IMR-90 (cell line): ENCODE measurements at regions of chr5 and their contacts with region 1.

Region 1: GRCh38 chr5:168268949-168269943 is 22.2 kb upstream of the WWC1 start:
- DNase-seq: peak; percentile 82
- ATAC-seq: peak; percentile 95
- H3K4me3 ChIP-seq: peak overlapping the region; percentile 38
- H3K27ac ChIP-seq: no peak overlapping the region
- H3K4me1 ChIP-seq: peaks cover 2% of the 10 kb centered on the region; the same call in 1 of the 2 replicates
- H3K27me3 ChIP-seq: no peaks in the 10 kb centered on the region; the same call in 1 of the 2 replicates
- CTCF ChIP-seq: peak; percentile 92
- POLR2A ChIP-seq: 0 out of 2 replicates have a peak, but pooled peaks have one; percentile 45
- RAD21 ChIP-seq: peak; percentile 97

Region 2: GRCh38 chr5:168198359-168198758 is 70.9 kb before region 1 on chr5:
- CTCF ChIA-PET with region 1: no interaction called
- POLR2A ChIA-PET with region 1: no interaction called
- dilution Hi-C with region 1: no loop called
- in situ Hi-C with region 1: no loop called
- intact Hi-C with region 1: no loop called
- DNase-seq: no peak
- ATAC-seq: no peak
- H3K4me3 ChIP-seq: no peak overlapping the region
- H3K27ac ChIP-seq: no peak overlapping the region
- H3K4me1 ChIP-seq: no peaks in the 10 kb centered on the region
- H3K27me3 ChIP-seq: no peaks in the 10 kb centered on the region; the same call in 1 of the 2 replicates
- CTCF ChIP-seq: no peak
- POLR2A ChIP-seq: no peak
- RAD21 ChIP-seq: no peak

Region 3: GRCh38 chr5:168307925-168308584 is 38.8 kb after region 1 on chr5:
- CTCF ChIA-PET with region 1: no interaction called
- POLR2A ChIA-PET with region 1: no interaction called
- dilution Hi-C with region 1: no loop called
- in situ Hi-C with region 1: no loop called
- intact Hi-C with region 1: loop called (anchors 2 kb)
- DNase-seq: no peak
- ATAC-seq: no peak
- H3K4me3 ChIP-seq: no peak overlapping the region
- H3K27ac ChIP-seq: no peak overlapping the region
- H3K4me1 ChIP-seq: peaks cover 6% of the 10 kb centered on the region
- H3K27me3 ChIP-seq: no peaks in the 10 kb centered on the region
- CTCF ChIP-seq: no peak
- POLR2A ChIP-seq: no peak
- RAD21 ChIP-seq: no peak

Region 4: DNA sequence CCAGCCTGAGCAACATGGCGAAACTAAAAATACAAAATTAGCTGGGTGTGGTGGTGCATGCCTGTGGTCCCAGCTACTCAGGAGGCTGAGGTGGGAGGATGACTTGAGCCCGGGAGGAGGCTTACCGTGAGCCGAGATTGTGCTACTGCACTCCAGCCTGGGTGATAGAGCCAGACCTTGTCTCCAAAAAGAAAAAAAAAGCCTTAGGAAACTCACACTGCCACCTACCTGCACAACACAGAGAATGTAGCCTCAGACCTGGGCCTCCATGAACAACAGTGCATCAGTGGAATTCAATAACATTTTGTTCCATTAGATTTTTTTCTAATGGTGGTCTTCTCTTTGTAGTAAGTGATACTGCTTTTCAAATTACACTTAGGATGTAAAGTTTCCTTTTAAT is 153.2 kb after region 1 on chr5:
- CTCF ChIA-PET with region 1: no interaction called
- POLR2A ChIA-PET with region 1: no interaction called
- dilution Hi-C with region 1: no loop called
- in situ Hi-C with region 1: no loop called
- intact Hi-C with region 1: loop called (anchors 2 kb)
- DNase-seq: no peak
- ATAC-seq: 0 out of 2 replicates have a peak, but pooled peaks have one; percentile 27
- H3K4me3 ChIP-seq: no peak overlapping the region
- H3K27ac ChIP-seq: no peak overlapping the region
- H3K4me1 ChIP-seq: peaks cover 9% of the 10 kb centered on the region
- H3K27me3 ChIP-seq: no peaks in the 10 kb centered on the region
- CTCF ChIP-seq: peak; percentile 27
- POLR2A ChIP-seq: no peak
- RAD21 ChIP-seq: no peak

Region 5: GRCh38 chr5:168472329-168472728 is 203.1 kb after region 1 on chr5:
- CTCF ChIA-PET with region 1: no interaction called
- POLR2A ChIA-PET with region 1: no interaction called
- dilution Hi-C with region 1: no loop called
- in situ Hi-C with region 1: no loop called
- intact Hi-C with region 1: loop called (anchors 1 kb)
- DNase-seq: peak; percentile 96
- ATAC-seq: peak; percentile 98
- H3K4me3 ChIP-seq: no peak overlapping the region
- H3K27ac ChIP-seq: peak overlapping the region; percentile 75; the same call in 1 of the 2 replicates
- H3K4me1 ChIP-seq: peaks cover 19% of the 10 kb centered on the region
- H3K27me3 ChIP-seq: no peaks in the 10 kb centered on the region
- CTCF ChIP-seq: peak; percentile 53
- POLR2A ChIP-seq: 0 out of 2 replicates have a peak, but pooled peaks have one; percentile 41
- RAD21 ChIP-seq: peak; percentile 66

Region 6: DNA sequence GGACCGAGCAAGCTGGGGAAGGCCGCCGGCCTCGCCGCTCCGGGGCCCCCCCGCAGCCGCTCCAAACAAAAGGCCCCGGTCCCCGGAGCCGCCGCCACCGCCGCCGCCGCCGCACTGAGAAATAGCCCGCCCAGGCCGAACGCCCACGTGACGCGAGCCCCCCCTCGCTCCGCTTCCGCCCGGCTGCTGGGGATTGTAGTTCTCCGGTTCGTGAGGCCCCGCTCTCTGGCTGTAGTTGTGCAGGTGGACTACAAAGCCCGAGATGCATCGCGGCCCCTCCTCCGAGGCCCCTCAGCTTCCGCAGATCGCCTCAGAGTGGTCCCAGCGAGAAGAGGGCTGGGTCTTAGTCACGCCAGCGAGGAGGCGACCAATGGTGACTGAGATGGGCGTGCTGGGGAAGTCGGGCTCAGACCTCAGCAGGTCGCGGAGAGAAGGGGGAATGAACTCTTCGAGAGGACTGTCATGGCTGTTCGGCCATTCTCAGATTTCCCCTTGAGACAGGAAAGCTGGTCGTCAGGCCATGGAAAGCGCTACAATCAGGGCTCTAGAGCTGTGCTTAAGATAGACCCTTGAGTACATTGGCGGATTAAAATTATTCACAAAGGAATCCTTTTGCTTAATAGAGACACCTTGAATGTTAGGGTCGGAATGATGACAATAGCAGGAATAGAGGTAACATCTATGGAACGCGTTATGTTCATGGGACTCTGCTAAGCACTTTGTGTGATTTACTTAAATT is 310.4 kb after region 1 on chr5:
- CTCF ChIA-PET with region 1: no interaction called
- POLR2A ChIA-PET with region 1: no interaction called
- dilution Hi-C with region 1: no loop called
- in situ Hi-C with region 1: no loop called
- intact Hi-C with region 1: loop called (anchors 1 kb)
- DNase-seq: peak; percentile 99
- ATAC-seq: peak; percentile 97
- H3K4me3 ChIP-seq: peak overlapping the region; percentile 97
- H3K27ac ChIP-seq: peak overlapping the region; percentile 84
- H3K4me1 ChIP-seq: no peaks in the 10 kb centered on the region
- H3K27me3 ChIP-seq: no peaks in the 10 kb centered on the region
- CTCF ChIP-seq: no peak
- POLR2A ChIP-seq: peak; percentile 34
- RAD21 ChIP-seq: no peak

Region 7: GRCh38 chr5:168642019-168642418 is 372.8 kb after region 1 on chr5:
- CTCF ChIA-PET with region 1: no interaction called
- POLR2A ChIA-PET with region 1: no interaction called
- dilution Hi-C with region 1: no loop called
- in situ Hi-C with region 1: no loop called
- intact Hi-C with region 1: no loop called
- DNase-seq: no peak
- ATAC-seq: no peak
- H3K4me3 ChIP-seq: no peak overlapping the region
- H3K27ac ChIP-seq: no peak overlapping the region
- H3K4me1 ChIP-seq: no peaks in the 10 kb centered on the region
- H3K27me3 ChIP-seq: no peaks in the 10 kb centered on the region
- CTCF ChIP-seq: no peak
- POLR2A ChIP-seq: no peak
- RAD21 ChIP-seq: no peak

Region 8: GRCh38 chr5:168822745-168823281 is 553.6 kb after region 1 on chr5:
- CTCF ChIA-PET with region 1: no interaction called
- POLR2A ChIA-PET with region 1: no interaction called
- dilution Hi-C with region 1: no loop called
- in situ Hi-C with region 1: loop called (anchors 25 kb)
- intact Hi-C with region 1: no loop called
- DNase-seq: peak; percentile 1
- ATAC-seq: no peak
- H3K4me3 ChIP-seq: no peak overlapping the region
- H3K27ac ChIP-seq: no peak overlapping the region
- H3K4me1 ChIP-seq: no peaks in the 10 kb centered on the region
- H3K27me3 ChIP-seq: no peaks in the 10 kb centered on the region
- CTCF ChIP-seq: no peak
- POLR2A ChIP-seq: no peak
- RAD21 ChIP-seq: no peak

Region 9: GRCh38 chr5:169296419-169297143 is 1027.3 kb after region 1 on chr5:
- CTCF ChIA-PET with region 1: no interaction called
- POLR2A ChIA-PET with region 1: no interaction called
- dilution Hi-C with region 1: no loop called
- in situ Hi-C with region 1: loop called (anchors 25 kb)
- intact Hi-C with region 1: loop called (anchors 5 kb)
- DNase-seq: no peak
- ATAC-seq: no peak
- H3K4me3 ChIP-seq: no peak overlapping the region
- H3K27ac ChIP-seq: no peak overlapping the region
- H3K4me1 ChIP-seq: no peaks in the 10 kb centered on the region
- H3K27me3 ChIP-seq: peaks cover 22% of the 10 kb centered on the region
- CTCF ChIP-seq: no peak
- POLR2A ChIP-seq: no peak
- RAD21 ChIP-seq: no peak